Astrocyte of the cerebellum (primary cell): ENCODE measurements at regions of chr13 and their contacts with region 1.

Region 1: DNA sequence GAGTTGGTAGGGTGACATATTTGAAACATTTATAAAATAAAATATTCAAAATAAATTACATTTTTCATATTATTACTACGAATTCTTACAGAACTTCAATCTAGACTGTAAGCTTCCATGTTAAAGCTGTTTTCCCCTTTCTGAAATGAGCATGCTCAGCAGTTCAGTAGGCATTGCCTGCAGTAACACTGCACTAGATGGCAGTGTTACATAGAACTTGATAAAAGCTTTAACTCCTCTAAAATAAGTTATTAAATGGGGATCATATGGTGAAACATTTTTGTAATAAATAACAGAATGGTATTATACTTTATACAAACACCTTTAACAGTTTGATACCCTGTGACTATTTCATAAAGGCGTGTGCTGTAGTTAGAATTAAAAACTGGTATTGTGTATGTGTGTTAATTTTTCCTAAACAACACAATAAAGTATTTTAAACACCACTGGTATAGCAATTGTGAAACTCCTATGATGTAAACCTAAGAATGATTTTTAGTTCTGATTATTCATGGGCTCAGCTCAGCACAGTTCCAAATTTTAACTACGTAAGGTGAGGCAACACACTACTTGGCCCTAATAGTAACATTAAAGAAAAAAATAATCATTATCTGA is 11.6 kb upstream of the GPR18 start:
- DNase-seq: peak; percentile 49
- H3K4me3 ChIP-seq: no peak overlapping the region
- CTCF ChIP-seq: peak; percentile 75

Region 2: GRCh38 chr13:99176309-99177276 is 93.1 kb before region 1 on chr13:
- in situ Hi-C with region 1: loop called (anchors 5 kb)
- DNase-seq: no peak
- H3K4me3 ChIP-seq: no peak overlapping the region
- CTCF ChIP-seq: peak; percentile 95

Region 3: GRCh38 chr13:99322297-99323103 is 52.8 kb after region 1 on chr13:
- in situ Hi-C with region 1: no loop called
- DNase-seq: peak; percentile 78
- H3K4me3 ChIP-seq: no peak overlapping the region
- CTCF ChIP-seq: no peak

Region 4: GRCh38 chr13:99436686-99437416 is 167.1 kb after region 1 on chr13:
- in situ Hi-C with region 1: loop called (anchors 10 kb)
- DNase-seq: peak; percentile 66
- H3K4me3 ChIP-seq: no peak overlapping the region
- CTCF ChIP-seq: peak; percentile 100